ENCODE measurements at regions of chr19 and their contacts with region 1.

Region 1: DNA sequence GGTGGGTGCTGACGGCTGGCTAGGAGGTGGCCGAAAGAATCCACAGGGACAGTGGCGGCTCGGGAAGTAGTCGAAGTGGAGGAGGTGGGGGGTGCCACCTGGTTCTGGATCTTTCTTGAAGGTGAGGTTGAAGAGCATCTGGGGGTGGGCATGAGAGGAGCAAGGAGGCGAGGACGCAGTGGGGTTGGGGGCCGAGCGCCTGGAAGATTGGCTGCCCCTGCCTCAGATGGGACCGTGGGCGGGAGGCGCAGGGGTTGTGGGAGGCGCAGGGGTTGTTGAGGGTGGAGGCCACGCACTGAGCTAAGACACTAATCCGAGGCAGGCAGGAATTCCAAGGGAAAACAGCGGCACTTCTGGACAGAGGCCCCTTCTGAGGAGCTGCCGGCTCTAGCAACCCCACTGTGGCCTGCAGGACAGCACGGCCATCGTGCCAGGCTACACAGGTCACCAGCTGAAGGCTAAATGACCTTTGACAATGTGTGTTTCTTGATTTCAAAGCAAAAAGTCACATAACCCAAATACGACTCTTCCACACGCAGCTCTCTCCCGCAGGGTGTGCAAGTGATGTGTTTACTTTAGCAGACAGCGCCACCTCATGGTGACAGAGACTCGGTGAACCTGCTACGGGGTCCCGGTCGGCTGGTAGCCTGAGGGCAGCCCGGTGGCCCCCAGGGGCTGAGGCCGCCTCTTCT is 44.1 kb upstream of the RANBP3 start:
- DNase-seq: peak; percentile 75 to 88 (median 86)
- ATAC-seq: peak; percentile 90
- H3K4me3 ChIP-seq: no peak overlapping the region
- H3K27ac ChIP-seq: no peak overlapping the region
- H3K4me1 ChIP-seq: no peaks in the 10 kb centered on the region
- H3K27me3 ChIP-seq: no peaks in the 10 kb centered on the region

Region 2: DNA sequence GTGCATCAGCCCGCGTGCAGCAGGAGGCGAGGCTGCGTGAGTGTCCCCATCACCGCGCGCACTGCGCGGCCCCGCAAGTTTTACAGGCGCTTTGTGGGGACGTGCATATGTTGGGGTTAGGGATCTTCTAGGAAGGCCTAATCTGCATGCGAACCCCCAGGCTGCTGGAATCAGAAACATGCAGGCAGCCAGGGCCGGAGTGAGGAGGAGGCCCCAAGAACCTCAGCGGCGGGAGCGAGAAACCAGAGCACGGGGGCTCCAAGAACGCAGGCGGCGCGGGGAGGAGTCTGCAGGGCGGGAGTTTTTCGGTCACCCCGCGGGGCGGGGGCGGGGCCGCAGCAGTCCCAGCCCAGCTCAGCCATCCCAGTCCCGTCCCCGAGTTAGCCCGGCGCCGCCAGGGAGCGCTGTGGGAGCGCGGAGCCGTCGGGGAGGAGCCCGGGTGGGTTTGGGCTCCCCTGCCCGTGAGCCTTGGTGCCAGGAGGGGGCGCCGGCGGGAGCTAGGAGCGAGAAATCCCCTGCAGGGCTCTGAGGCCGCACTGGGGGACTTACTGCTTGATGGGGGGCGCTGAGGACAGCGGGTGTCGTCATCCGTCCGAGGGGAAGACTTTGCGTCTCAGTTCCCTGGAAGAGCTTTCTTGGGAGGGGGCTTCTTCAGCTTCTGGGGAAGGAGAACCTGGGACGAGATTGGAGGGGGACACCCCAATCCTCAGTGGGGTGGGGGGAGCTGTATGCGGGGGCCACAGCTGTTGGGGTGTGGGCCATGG is 218.1 kb before region 1 on chr19:
- intact Hi-C with region 1: loop called in 2 of 4 experiments (anchors 5 to 10 kb)
- DNase-seq: peak; percentile 89 to 96 (median 95)
- ATAC-seq: peak; percentile 85
- H3K4me3 ChIP-seq: peak overlapping the region; percentile 15
- H3K27ac ChIP-seq: no peak overlapping the region
- H3K4me1 ChIP-seq: no peaks in the 10 kb centered on the region
- H3K27me3 ChIP-seq: no peaks in the 10 kb centered on the region

Region 3: DNA sequence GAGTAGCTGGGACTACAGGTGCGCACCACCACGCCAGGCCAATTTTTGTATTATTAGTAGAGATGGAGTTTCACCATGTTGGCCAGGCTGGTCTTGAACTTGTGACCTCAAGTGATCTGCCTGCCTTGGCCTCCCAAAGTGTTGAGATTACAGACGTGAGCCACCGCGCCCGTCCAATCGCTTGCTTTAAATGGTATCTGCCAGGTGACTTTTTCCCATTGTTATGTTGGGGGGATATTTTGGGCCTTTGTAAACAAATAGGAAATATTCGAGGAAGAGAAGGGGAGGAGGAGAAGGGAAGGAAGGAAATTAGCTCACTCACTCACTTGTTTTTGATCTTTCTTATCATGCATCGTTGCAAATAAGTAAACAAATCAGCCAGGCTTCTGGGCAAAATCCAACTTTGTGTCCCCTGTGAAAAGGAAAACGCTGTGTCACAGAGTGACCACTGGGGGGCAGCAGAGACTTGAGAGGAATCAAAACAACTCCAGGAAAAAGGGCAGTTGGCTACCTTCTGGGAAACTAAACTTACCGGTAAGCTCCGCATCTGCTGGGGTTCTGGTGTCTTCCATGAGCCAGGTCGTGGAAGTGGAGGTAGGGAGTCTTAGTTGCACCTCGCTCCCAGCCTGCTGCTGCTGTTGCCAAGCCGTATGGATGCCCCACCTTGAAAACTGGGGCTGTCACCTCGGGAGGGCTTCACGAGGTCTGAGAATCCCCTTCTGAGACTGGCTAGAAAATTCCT is 34.8 kb before region 1 on chr19:
- intact Hi-C with region 1: loop called in 3 of 4 experiments (anchors 2 to 5 kb)
- DNase-seq: peak; percentile 70 to 84 (median 80)
- ATAC-seq: peak; percentile 33 to 54
- H3K4me3 ChIP-seq: peak overlapping the region; percentile 32
- H3K27ac ChIP-seq: no peak overlapping the region
- H3K4me1 ChIP-seq: peaks cover 3% of the 10 kb centered on the region
- H3K27me3 ChIP-seq: no peaks in the 10 kb centered on the region